WTC11 (cell line): ENCODE measurements at regions of chr16 and their contacts with region 1.

Region 1: DNA sequence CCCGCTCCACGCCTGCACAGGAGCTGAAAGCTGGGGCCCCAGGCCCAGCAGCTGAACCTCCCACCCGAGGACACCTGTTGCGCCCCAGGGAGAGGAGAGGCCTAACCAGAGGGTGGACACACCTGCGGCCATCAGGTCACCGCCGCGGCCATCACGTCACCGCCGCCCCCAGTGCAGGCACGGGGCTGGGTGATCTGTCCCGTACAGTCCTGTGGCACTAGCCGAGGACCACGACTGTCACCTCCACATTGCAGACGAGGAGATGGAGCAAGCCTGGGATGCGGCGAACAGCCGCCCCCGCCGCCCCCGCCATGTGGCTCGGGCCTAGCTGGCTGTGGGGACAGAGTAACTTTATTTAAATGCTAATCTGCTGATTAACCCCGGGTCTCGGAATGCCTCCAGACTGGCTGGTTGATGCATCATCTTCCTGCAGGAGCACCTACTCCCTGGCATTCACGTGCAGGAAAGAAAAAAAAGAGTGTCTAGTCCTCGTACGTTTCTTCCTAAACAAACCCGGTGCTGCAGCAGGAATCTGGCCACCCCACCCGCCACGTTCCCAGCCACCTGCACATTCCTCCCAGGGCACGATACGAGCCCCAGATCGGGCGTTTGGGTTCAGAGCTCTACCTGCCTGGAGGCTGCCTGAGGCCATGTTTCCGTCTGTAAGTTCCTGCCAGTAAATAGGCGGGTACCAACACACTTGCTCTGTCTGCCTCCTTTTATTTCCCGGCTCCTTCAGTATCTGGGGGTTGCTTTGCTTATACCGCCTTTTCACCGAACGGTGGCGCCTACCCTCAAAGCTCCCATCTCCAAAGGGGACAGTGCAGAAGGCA is 29.9 kb downstream of the PIEZO1 start:
- DNase-seq: peak; percentile 72
- ATAC-seq: peak; percentile 78
- H3K4me3 Mint-ChIP-seq: no peak overlapping the region
- H3K27ac Mint-ChIP-seq: peak overlapping the region; percentile 85; the same call in 1 of the 2 replicates
- H3K4me1 Mint-ChIP-seq: peaks cover 18% of the 10 kb centered on the region
- H3K27me3 Mint-ChIP-seq: no peaks in the 10 kb centered on the region
- CTCF ChIP-seq: no peak

Region 2: GRCh38 chr16:88610080-88610479 is 145.0 kb before region 1 on chr16:
- CTCF ChIA-PET with region 1: no interaction called
- POLR2A ChIA-PET with region 1: no interaction called
- DNase-seq: peak; percentile 34
- ATAC-seq: peak; percentile 66
- H3K4me3 Mint-ChIP-seq: no peak overlapping the region
- H3K27ac Mint-ChIP-seq: no peak overlapping the region
- H3K4me1 Mint-ChIP-seq: peaks cover 13% of the 10 kb centered on the region
- H3K27me3 Mint-ChIP-seq: no peaks in the 10 kb centered on the region
- CTCF ChIP-seq: no peak

Region 3: DNA sequence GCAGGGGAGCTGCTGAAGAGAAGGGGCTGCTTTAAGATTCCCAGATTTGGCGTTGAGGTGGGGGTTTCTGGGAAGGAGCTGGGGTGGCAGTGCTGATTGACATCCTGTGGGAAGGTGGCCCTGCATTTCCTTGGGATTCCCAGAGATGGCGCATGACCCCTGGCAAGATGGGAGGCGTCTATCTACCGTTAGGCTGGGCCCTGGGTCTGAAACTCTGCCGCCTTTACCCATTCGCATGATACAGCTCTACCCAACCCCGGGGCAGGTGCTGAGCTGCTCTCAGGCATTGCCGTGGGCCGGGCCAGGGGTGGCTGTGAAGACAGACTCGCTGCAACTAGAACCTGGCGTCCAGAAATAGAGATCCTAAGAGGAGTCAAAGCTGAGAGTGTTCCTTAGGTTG is 82.4 kb before region 1 on chr16:
- CTCF ChIA-PET with region 1: interaction called, 11 read pairs
- POLR2A ChIA-PET with region 1: no interaction called
- DNase-seq: peak; percentile 80
- ATAC-seq: peak; percentile 98
- H3K4me3 Mint-ChIP-seq: no peak overlapping the region
- H3K27ac Mint-ChIP-seq: peak overlapping the region; percentile 49; the same call in 1 of the 2 replicates
- H3K4me1 Mint-ChIP-seq: no peaks in the 10 kb centered on the region; the same call in 1 of the 2 replicates
- H3K27me3 Mint-ChIP-seq: no peaks in the 10 kb centered on the region
- CTCF ChIP-seq: no peak

Region 4: DNA sequence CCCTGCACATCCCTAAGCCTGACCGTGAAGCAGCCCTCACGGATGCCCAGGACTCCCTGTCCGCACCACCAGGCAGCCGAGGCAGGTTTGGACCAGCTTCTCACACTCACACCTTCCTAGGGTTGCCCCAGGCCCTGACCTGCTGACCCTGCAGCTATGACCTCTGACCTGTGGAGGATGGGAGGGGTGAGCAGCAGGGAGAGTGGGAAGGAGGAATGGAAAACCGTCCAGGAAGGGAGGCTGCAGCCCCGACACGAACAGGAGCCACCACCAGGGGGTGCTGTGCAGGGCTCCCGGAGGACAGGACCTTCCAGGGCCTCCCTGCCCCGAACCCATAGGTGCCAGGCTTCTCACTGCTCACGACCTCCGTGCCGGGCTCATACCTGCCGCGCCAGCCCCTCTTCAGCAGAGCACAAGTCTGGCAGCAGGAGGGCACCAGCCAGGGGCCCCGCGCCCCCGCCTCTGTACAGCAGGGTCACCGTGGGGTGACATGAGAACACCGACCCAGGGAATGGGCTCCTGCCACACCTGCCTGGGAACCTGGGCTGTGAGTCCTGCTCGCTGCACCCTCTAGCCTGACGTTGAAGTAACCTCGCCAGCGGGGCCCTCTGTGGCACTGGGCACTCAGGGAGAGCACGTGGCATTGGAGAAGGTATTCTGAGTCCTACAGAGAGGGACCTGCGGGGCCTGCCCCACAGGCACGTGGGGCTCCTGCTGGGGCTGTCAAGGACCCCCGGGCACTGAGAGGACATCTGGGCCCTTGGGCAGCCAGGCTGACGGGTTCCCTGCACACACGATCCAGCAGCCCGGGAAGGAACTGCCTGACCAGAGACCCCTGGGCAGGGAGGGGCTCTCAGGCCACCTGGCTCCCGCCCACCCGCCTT is 11.2 kb before region 1 on chr16:
- CTCF ChIA-PET with region 1: interaction called, 81 read pairs
- POLR2A ChIA-PET with region 1: no interaction called
- DNase-seq: peak; percentile 94
- ATAC-seq: peak; percentile 63
- H3K4me3 Mint-ChIP-seq: no peak overlapping the region
- H3K27ac Mint-ChIP-seq: peak overlapping the region; percentile 70; the same call in 1 of the 2 replicates
- H3K4me1 Mint-ChIP-seq: peaks cover 13% of the 10 kb centered on the region
- H3K27me3 Mint-ChIP-seq: no peaks in the 10 kb centered on the region
- CTCF ChIP-seq: peak; percentile 94

Region 5: DNA sequence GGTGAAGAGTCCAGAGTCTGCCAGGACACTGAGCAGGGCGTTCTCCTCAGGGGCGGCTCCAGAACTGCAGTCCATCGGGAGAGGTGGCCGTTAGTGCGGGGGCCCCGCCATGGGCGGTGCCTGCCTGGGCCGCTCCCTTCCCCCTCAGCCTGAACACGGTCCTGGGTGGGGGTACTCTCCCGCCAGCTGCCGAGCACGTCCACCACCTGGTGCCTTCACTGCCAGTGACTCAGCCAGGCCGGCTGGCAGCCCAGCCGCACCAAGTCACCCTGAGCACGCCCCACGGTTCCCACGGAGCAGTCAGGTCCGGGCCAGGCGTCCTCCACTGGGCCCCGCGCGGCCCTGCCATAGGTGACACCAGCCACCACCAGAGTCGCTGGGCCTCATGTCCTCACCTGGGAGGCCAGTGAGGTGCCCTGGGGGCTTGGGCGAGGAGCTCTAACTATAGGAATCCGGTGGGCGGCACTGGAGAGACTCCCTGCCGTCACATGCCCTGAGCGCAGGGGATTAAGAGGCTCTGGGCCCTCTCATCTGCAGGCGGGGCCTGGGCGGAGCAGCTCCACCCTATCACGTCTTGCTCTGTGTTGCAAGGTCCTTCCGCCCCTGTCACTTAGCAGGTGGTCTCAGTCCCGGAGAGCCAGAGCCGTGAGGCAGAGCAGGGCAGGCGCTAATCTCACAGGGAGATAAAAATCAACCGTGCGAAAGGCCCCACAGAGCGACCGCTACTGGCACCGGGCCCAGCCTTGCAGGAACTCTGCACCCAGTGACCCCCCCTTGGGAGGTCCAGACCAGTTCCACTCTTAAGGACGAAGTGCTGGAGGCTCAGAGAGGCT is 15.5 kb after region 1 on chr16:
- CTCF ChIA-PET with region 1: interaction called, 115 read pairs
- POLR2A ChIA-PET with region 1: interaction called, 4 read pairs
- DNase-seq: peak; percentile 65
- ATAC-seq: peak; percentile 64
- H3K4me3 Mint-ChIP-seq: no peak overlapping the region
- H3K27ac Mint-ChIP-seq: peak overlapping the region; percentile 57
- H3K4me1 Mint-ChIP-seq: peaks cover 29% of the 10 kb centered on the region
- H3K27me3 Mint-ChIP-seq: no peaks in the 10 kb centered on the region
- CTCF ChIP-seq: no peak

Region 6: DNA sequence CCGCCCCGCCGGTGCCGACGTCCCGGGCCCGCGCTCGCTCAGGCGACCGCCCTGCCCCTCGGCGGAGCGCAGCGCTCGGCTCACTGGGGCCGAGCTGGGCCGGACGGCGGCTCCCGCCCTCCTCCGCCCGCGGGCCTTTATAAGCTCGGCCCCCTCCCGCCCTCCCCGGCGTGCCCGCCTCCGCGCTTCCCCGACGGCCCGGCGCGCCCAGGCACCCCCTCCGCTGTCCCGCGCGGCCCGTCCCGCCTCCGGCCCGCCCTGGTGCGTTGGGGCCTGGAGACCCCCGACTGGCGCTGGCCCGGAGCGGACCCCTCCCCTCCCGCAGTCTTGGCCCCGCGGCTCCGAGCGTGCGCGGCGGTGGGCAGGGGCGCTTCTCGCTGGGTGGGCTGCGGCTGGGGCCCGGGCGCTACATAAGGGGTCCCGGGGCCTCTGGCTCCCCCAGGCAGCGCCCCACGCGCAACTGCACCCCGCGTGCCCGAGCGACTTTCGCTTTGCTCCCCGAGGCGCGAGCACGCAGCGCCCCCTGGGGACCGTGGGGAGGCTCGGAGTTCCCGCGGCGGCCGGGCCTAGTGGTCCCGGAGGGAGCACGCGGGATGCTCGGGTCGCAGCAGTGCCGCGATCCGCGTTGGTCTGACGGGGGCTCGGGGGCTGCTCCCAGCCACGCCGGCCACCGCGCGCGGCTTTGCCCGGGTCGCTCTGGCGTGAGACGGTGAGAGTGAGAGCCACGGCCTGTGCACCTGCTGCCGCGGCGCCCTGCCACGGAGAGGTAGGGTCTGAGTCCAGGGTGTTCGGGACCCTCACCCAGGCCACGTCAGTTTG is 30.2 kb after region 1 on chr16 and contains the start of gene PIEZO1:
- CTCF ChIA-PET with region 1: interaction called, 34 read pairs
- POLR2A ChIA-PET with region 1: interaction called, 4 read pairs
- DNase-seq: peak; percentile 53
- ATAC-seq: peak; percentile 40
- H3K4me3 Mint-ChIP-seq: peak within 1 kb of the TSS; percentile 73
- H3K27ac Mint-ChIP-seq: no peak within 1 kb of the TSS
- H3K4me1 Mint-ChIP-seq: peaks cover 16% of the 10 kb centered on the region
- H3K27me3 Mint-ChIP-seq: 0 out of 2 replicates have a peak, but pooled peaks cover 3% of the 10 kb centered on the region
- CTCF ChIP-seq: no peak
- total RNA-seq, gene PIEZO1: 68.3 to 75.1 TPM (median 71.3 TPM) in 3 replicates

Region 7: DNA sequence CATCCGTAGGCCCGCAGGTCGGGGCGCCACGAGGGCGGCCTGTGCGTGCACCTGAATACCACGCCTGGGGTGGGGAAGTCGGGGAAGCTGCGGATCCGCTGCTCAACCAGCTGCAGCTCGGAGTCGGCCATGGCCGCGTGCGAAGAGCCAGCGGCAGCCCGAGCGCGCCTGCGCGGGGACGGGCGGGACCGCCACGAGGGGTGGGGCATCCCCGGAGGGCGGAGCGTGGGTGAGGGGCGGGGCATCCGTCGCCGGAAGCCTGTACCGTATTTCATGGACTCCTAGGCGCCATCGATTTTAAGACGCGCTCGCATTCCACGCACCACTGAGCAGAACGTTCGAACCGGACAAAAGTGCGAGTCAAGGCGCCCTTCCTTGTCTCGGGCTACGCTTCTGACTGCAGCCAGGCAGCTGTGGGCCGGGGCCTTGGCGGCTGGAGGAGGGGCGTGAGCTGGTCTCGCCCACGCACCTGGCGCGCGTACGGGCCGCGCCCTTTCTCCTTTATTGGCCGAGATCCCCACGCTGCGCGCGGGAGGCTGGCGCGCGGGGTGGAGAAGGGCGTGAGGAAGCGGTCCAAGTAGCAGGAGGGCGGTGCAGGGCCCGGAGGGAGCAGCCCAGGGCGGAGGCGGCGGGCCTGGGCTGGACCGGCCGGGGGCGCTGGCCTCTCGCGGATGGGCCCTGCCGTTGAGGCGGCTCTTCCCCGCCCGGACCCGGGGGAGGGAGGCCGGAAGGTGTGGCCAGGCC is 56.8 kb after region 1 on chr16 and contains the start of gene APRT:
- CTCF ChIA-PET with region 1: interaction called, 11 read pairs
- POLR2A ChIA-PET with region 1: interaction called, 3 read pairs
- DNase-seq: peak; percentile 95
- ATAC-seq: peak; percentile 61
- H3K4me3 Mint-ChIP-seq: peak within 1 kb of the TSS; percentile 87
- H3K27ac Mint-ChIP-seq: peak within 1 kb of the TSS; percentile 98
- H3K4me1 Mint-ChIP-seq: peaks cover 14% of the 10 kb centered on the region
- H3K27me3 Mint-ChIP-seq: no peaks in the 10 kb centered on the region
- CTCF ChIP-seq: no peak
- total RNA-seq, gene APRT: 272 to 288 TPM (median 282 TPM) in 3 replicates